H1 (cell line): ENCODE measurements at regions of chr19 and their contacts with region 1.

Region 1: DNA sequence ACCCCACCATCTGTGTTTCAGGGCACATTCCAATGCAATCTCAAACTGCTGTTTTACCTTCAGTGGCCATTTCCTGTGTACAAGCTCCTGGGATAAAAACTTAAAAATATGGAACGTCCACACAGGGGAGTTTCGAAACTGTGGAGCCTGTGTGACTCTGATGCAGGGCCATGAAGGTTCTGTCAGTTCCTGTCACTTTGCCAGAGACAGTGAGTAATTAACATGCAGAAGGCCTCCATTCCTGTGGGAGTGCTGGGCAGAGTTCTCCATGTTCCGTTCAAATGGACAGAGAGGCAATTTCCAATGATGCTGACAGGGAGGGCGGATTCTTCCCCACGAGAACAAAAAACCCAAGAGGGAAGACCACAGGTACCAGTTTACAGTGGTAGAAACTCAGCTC is 24.4 kb downstream of the WDR88 start:
- DNase-seq: no peak
- H3K4me3 ChIP-seq: no peak overlapping the region
- H3K27ac ChIP-seq: no peak overlapping the region
- H3K4me1 ChIP-seq: no peaks in the 10 kb centered on the region
- H3K27me3 ChIP-seq: no peaks in the 10 kb centered on the region
- CTCF ChIP-seq: no peak
- EP300 ChIP-seq: no peak
- POLR2A ChIP-seq: no peak
- RAD21 ChIP-seq: no peak

Region 2: DNA sequence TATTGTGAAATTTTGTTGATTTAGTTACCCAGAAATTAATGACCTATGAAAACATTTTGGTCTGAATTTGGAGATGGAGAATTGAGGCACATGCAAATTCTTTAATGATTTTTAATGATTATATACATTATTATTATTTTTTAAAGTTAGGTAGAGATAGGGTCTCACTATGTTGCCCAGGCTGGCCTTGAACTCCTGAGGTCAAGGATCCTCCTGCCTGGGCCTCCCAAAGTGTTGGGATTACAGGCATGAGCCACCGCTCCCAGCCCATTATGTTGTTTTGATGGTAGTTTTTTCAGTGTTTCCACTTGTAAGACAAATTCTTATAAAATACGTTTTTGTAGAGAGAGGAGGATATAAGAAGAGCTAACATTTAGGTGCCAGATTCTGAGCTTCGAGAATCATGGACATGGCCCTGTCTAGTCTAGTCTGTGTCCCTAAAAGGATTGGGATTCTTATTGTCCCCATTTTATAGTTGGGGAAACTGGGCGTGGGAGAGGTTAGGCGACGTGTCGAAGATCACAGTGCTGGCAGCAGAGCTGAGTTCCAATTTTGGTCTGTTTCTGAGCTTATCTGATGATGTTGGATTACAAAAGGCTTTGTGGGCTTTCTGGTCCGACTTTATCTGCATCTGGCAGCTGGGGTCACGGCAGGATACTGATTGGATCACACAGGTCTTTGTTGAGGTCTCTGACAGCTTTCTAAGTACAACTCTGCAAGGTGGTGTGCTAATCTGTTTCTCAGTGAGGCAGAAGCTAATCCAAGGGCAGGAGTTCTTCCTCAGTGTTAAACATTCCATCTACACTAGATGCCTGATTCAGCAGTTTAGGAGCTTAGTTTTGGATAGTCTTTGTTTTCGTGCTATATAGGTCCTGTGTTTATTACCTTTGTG is 31.9 kb before region 1 on chr19:
- CTCF ChIA-PET with region 1: no interaction called
- POLR2A ChIA-PET with region 1: no interaction called
- DNase-seq: no peak
- H3K4me3 ChIP-seq: no peak overlapping the region
- H3K27ac ChIP-seq: no peak overlapping the region
- H3K4me1 ChIP-seq: no peaks in the 10 kb centered on the region
- H3K27me3 ChIP-seq: no peaks in the 10 kb centered on the region
- CTCF ChIP-seq: no peak
- EP300 ChIP-seq: no peak
- POLR2A ChIP-seq: no peak
- RAD21 ChIP-seq: no peak

Region 3: GRCh38 chr19:33143897-33144405 is 12.4 kb before region 1 on chr19:
- CTCF ChIA-PET with region 1: interaction called, 12 read pairs
- POLR2A ChIA-PET with region 1: no interaction called
- DNase-seq: peak in 1 of 2 experiments; percentile 78
- H3K4me3 ChIP-seq: no peak overlapping the region
- H3K27ac ChIP-seq: no peak overlapping the region
- H3K4me1 ChIP-seq: peaks cover 0 to 2% (median 0%) of the 10 kb centered on the region in 4 experiments; a peak in 1 of 7 replicates
- H3K27me3 ChIP-seq: no peaks in the 10 kb centered on the region
- CTCF ChIP-seq: peak; percentile 93 to 96 (median 95)
- EP300 ChIP-seq: peak in 1 of 2 experiments; percentile 67; a peak in 1 of 3 replicates
- POLR2A ChIP-seq: no peak
- RAD21 ChIP-seq: peak; percentile 86

Region 4: DNA sequence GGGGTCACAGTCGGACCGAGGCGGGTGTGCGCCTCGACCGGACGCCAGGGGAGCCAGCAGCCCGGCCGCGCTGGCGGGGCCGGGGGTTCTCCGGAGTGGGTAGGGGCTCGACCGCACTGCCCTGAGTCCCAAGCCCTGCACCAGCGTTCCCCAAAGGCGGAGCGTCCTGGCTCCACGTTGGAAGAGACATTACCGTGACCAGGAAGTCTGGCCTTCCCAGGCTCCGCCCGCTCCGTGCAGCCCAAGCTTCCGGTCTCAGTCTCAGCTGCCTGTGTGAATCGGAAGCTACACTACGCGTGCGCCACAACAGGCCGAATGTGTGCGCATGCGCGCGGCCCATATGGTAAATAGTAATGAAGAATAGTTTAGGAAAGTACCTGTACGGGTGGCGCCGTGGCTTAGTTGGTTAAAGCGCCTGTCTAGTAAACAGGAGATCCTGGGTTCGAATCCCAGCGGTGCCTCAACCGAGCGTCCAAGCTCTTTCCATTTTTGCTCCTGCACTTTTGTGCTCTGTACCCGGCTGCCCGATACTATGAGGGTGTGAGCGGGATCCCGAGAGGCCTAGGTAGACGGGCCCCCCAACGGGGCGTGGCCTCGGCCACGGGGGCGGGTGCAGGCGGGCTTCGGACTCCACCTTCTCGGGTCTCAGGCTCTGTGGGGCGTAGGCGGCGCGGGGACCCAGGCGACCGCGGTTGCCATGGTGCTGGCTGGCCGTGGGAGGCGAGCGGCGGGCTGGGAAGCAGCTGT is 20.5 kb after region 1 on chr19:
- CTCF ChIA-PET with region 1: interaction called, 19 read pairs
- POLR2A ChIA-PET with region 1: interaction called, 15 read pairs
- DNase-seq: peak; percentile 96 to 100
- H3K4me3 ChIP-seq: peak overlapping the region; percentile 73 to 91 (median 90)
- H3K27ac ChIP-seq: peak overlapping the region; percentile 78
- H3K4me1 ChIP-seq: peaks cover 0 to 3% (median under 1%) of the 10 kb centered on the region in 4 experiments; a peak in 3 of 7 replicates
- H3K27me3 ChIP-seq: peaks cover 0 to 2% (median 1%) of the 10 kb centered on the region in 4 experiments; a peak in 3 of 7 replicates
- CTCF ChIP-seq: no peak
- EP300 ChIP-seq: 0 out of 3 replicates have a peak, but pooled peaks of 1 of the 2 experiments have one; percentile 33
- POLR2A ChIP-seq: peak; percentile 46 to 88
- RAD21 ChIP-seq: no peak